ENCODE measurements at regions of chr1 and their contacts with region 1.

Region 1: DNA sequence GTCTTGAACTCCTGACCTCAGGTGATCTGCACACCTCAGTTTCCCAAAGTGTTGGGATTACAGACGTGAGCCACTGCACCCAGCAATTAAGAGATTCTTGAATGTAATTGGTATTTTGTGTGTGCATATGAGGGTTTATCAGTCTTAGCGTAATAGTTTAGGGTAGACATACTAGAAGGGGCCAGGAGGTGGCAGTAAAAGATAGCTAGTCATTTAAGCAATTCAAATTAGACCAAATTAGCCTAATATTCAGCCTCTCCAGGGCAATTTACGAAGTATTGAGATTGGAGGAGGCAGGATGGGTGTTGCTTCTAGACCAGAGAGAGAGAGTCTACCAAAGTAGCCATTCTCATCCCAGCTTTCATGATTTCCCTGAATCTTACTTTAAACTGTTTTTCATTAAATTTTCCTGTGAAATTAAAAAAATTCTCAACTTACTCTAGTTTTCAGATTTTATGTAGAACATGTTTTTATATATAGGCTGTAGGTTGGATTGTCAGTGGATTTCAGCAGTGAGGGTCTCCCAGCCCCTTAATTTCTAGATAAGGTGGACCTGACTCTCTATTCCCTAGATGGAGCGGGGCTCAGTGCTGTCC is 119.7 kb downstream of the HHAT start:
- DNase-seq: no peak
- ATAC-seq: peak; percentile 81
- H3K4me3 ChIP-seq: no peak overlapping the region
- H3K27ac ChIP-seq: no peak overlapping the region
- H3K4me1 ChIP-seq: no peaks in the 10 kb centered on the region
- H3K27me3 ChIP-seq: no peaks in the 10 kb centered on the region
- CTCF ChIP-seq: peak; percentile 49 to 59 (median 54)
- EP300 ChIP-seq: no peak
- POLR2A ChIP-seq: no peak
- RAD21 ChIP-seq: peak; percentile 60

Region 2: DNA sequence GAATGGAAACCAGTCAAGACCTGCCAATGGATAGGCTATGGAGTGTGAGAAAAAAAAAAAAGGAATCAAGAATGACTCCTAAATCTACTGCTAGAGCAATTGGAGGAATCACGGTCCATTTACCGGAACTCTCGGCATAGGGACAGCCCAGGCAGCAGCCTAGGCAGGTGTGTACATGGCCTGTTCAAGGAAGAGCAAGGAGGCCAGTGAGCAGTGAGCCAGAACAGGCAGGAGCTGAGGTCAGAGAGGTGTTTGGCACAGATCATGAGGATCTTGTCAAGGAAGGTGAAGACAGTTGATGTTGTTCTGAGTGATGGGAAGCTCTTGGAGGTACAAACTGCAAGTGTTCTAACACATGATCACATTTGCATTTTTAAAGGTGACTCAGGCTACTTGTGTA is 160.3 kb before region 1 on chr1:
- CTCF ChIA-PET with region 1: no interaction called
- POLR2A ChIA-PET with region 1: no interaction called
- RAD21 ChIA-PET with region 1: no interaction called
- SMC1A ChIA-PET with region 1: no interaction called
- in situ Hi-C with region 1: no loop called
- intact Hi-C with region 1: no loop called
- DNase-seq: no peak
- ATAC-seq: no peak
- H3K4me3 ChIP-seq: no peak overlapping the region
- H3K27ac ChIP-seq: no peak overlapping the region
- H3K4me1 ChIP-seq: no peaks in the 10 kb centered on the region
- H3K27me3 ChIP-seq: peaks cover 3 to 4% of the 10 kb centered on the region in 2 experiments; a peak in 3 of 4 replicates
- CTCF ChIP-seq: no peak
- EP300 ChIP-seq: no peak
- POLR2A ChIP-seq: no peak
- RAD21 ChIP-seq: no peak

Region 3: GRCh38 chr1:210618369-210618768 is 170.0 kb after region 1 on chr1:
- CTCF ChIA-PET with region 1: no interaction called
- POLR2A ChIA-PET with region 1: no interaction called
- RAD21 ChIA-PET with region 1: no interaction called
- SMC1A ChIA-PET with region 1: no interaction called
- in situ Hi-C with region 1: no loop called
- intact Hi-C with region 1: no loop called
- DNase-seq: no peak
- ATAC-seq: no peak
- H3K4me3 ChIP-seq: no peak overlapping the region
- H3K27ac ChIP-seq: no peak overlapping the region
- H3K4me1 ChIP-seq: no peaks in the 10 kb centered on the region
- H3K27me3 ChIP-seq: no peaks in the 10 kb centered on the region
- CTCF ChIP-seq: no peak
- EP300 ChIP-seq: no peak
- POLR2A ChIP-seq: no peak
- RAD21 ChIP-seq: no peak

Region 4: DNA sequence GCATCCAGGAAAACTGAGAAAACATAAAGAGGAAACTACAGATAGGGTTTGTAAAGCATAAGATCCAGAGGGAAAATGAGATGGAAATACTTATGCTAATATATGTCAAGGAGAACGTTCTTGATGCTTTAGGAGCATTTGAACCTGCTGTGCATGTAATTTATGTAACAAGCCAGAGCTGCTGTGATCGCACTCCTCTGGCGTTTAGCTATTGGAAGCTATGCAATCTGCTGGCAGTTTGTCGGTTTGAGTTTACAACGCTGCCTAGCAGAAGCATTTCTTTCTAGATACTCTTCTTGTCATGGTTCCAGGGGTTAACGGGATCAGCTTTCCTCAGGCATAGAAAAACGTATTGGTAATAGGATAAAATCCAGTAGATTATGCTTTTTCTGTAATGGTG is 502.9 kb after region 1 on chr1:
- CTCF ChIA-PET with region 1: interaction called, 7 read pairs
- POLR2A ChIA-PET with region 1: no interaction called
- RAD21 ChIA-PET with region 1: interaction called, 5 read pairs
- SMC1A ChIA-PET with region 1: interaction called, 11 read pairs
- in situ Hi-C with region 1: no loop called
- intact Hi-C with region 1: loop called (anchors 2 kb)
- DNase-seq: no peak
- ATAC-seq: no peak
- H3K4me3 ChIP-seq: no peak overlapping the region
- H3K27ac ChIP-seq: no peak overlapping the region
- H3K4me1 ChIP-seq: no peaks in the 10 kb centered on the region
- H3K27me3 ChIP-seq: no peaks in the 10 kb centered on the region
- CTCF ChIP-seq: no peak
- EP300 ChIP-seq: no peak
- POLR2A ChIP-seq: no peak
- RAD21 ChIP-seq: no peak

Region 5: DNA sequence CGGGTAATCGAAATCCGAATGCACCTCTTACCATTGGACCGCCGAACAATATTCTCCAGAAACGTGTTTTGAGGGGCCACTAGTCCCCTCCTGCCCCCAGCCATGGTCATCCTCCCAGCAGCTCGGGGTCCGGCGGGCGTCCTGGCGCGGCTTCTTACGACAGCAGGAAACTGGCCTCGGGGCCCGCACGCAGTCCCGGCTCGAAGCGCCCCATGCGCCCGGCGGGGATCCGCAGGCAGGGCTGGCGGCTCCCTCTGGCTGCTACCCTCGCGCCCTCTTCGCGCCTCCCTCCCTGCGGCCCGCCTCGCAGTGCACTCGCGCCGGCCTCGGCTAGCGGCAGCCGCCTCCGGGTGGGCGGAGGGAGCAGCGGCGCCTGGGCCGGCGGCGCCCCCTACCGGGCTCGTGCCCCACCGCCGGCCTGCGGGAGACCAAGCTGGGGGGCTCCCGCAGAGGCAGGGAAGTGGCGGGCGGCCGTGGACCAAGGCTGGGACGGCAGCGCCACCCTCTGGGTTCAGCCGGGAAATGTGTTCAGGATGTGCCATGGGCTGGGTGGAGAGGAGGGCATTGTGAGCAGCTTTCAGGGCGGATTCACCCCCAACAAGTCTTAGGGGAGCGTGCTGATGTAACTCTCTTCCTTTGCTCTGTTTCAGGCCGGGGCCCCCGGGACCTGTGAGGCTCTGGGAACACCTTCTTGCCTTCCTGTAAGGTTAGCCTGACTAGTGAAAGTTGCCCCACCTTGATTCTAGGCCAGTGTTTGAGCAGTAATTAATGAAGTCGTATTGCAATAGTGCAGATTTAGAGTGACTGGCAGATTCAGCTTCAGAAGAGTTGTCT is 685.7 kb after region 1 on chr1 and contains the start of gene KCNH1:
- CTCF ChIA-PET with region 1: interaction called, 46 read pairs
- POLR2A ChIA-PET with region 1: interaction called, 5 read pairs
- RAD21 ChIA-PET with region 1: interaction called, 7 read pairs
- SMC1A ChIA-PET with region 1: interaction called, 5 read pairs
- in situ Hi-C with region 1: no loop called
- intact Hi-C with region 1: loop called (anchors 1 kb)
- DNase-seq: peak; percentile 7
- ATAC-seq: peak; percentile 97
- H3K4me3 ChIP-seq: no peak within 1 kb of the TSS
- H3K27ac ChIP-seq: no peak within 1 kb of the TSS
- H3K4me1 ChIP-seq: no peaks in the 10 kb centered on the region
- H3K27me3 ChIP-seq: peaks cover 0 to 4% of the 10 kb centered on the region in 2 experiments; a peak in 2 of 4 replicates
- CTCF ChIP-seq: peak; percentile 69 to 83 (median 81)
- EP300 ChIP-seq: no peak
- POLR2A ChIP-seq: no peak
- RAD21 ChIP-seq: peak; percentile 63
- polyA plus RNA-seq, gene KCNH1: 0.02 TPM in 1 of 2 experiments, not detected in the other